GM10248 (cell line): ENCODE measurements at regions of chr11 and their contacts with region 1.

Region 1: GRCh38 chr11:27698872-27699474 is 1.3 kb downstream of the BDNF start:
- DNase-seq: peak; percentile 79
- CTCF ChIP-seq: peak; percentile 78

Region 2: GRCh38 chr11:27717377-27717776 is 18.4 kb after region 1 on chr11:
- CTCF ChIA-PET with region 1: interaction called, 13 read pairs
- POLR2A ChIA-PET with region 1: no interaction called
- DNase-seq: no peak
- CTCF ChIP-seq: no peak

Region 3: GRCh38 chr11:28049338-28050216 is 350.6 kb after region 1 on chr11:
- CTCF ChIA-PET with region 1: no interaction called
- POLR2A ChIA-PET with region 1: no interaction called
- DNase-seq: no peak
- CTCF ChIP-seq: no peak

Region 4: DNA sequence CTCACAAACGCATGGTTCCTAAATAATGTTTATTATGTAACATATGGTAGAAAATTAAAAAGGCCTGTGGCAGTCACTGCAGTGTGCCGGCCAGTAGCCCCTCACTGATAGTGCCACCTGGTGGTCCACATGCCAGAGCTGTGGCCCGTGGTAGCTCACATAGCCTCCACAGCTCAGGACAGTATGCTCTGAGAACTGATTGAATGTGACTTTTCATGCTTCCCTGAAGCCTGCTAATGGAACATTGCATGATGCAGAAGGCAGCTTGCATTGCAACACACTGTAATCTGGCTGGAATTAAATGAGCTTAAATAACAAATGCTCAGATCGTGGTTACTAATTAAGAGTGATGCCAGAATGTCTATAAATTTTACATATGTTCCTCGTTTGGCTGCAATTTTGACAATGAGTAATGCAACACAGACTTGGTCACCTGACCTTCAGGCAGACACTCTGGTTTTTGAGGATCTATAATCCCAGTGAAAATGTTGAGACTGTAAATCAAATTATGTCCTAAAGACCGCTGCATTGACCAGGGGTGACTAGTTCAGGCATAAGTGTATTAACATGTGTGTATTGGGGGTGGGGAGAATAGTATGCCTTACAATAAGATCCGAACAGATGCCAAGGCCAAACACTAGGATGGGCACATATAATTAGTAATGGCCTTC is 975.6 kb after region 1 on chr11:
- CTCF ChIA-PET with region 1: interaction called, 22 read pairs
- POLR2A ChIA-PET with region 1: no interaction called
- DNase-seq: no peak
- CTCF ChIP-seq: peak; percentile 14

Region 5: DNA sequence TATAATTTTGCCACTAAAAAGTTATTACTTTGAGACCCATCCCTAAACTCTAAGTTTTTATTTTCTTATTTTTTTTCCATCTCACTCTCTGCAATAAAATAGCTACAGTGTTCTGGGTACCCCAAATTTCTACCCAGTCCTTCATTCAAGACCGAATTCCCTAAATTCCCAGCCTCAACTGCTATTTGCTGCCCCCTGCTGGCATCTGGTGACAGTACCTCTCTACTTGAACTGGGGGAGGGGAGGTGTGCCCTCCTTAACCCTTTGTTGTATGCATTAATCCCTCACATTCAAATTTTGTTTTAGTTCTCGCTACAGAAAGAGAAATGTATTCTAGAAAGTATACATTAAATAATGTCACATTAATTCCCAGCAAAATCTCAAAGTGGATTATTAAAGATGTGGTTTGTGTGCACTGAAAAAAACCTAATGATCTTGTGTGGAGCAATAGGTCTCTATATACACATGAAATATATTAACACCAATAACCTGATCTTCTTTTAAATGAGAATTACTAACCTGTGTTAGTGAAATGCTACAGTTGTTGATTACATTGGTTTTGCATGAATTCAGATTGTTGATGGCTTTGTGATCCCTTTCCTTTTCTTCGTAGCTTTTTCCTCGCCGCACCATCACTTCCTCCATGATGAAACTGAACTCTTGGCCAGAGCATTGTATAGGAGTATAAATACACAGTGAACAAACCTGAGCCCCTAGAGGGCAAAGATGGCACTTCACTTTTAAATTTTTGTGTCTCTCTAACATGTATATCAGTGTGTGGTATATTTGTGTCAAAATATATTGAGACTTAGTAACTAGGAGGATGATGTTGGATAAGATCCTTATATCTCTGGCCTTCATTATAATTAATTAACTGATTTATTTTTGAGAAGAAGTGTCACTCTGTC is 999.2 kb after region 1 on chr11:
- CTCF ChIA-PET with region 1: interaction called, 50 read pairs
- POLR2A ChIA-PET with region 1: no interaction called
- DNase-seq: peak; percentile 20
- CTCF ChIP-seq: peak; percentile 75

Region 6: DNA sequence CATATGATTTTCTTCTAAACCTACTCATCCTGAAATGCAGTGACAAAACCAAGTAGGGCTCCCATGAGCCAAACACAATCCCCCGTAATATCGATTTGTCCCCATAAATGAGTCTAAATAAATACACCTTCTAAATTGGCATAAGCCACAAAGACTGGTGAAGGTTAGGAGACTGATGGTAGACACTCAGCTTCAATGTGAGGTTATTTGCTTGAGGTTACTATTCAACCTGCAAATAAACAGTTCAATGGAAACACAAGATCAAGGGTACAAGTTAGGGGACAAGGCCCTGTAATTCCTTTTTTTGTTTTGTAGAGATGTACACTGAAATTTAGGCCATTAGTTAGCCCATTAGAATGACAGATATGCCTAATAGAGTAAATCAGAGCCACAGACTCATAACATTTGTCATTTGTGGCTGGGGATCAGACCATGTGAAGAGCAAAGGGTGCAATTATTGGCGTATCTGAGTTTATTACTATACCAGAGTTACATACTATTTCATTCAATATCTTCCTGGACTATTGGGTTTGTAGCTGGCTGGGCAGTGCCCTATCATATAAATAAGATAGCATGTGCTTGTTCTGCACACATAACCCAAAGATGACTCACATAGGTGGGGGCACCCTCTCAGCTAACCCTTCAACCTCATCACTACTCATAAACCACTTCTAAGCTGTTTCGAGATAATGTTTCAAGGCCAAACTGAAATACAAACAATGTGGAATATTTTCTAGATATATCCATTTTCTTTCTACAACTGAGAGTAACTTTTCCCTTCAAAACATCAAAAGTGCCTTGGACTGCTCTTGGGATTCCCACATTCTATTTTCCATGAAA is 1622.5 kb after region 1 on chr11:
- CTCF ChIA-PET with region 1: interaction called, 20 read pairs
- POLR2A ChIA-PET with region 1: no interaction called
- DNase-seq: no peak
- CTCF ChIP-seq: no peak

Region 7: GRCh38 chr11:29333993-29334775 is 1635.2 kb after region 1 on chr11:
- CTCF ChIA-PET with region 1: interaction called, 37 read pairs
- POLR2A ChIA-PET with region 1: no interaction called
- DNase-seq: peak; percentile 28
- CTCF ChIP-seq: peak; percentile 50